Gastrocnemius medialis (tissue), 4 donors: ENCODE measurements at regions of chr1 and their contacts with region 1.

Region 1: GRCh38 chr1:224454397-224455066 is 19.9 kb upstream of the WDR26 start:
- DNase-seq: peak in 1 of 2 donors; percentile 22
- ATAC-seq: no peak
- H3K4me3 ChIP-seq: no peak overlapping the region
- H3K27ac ChIP-seq: peak overlapping the region in 2 of 4 donors; percentile 37 to 41
- H3K4me1 ChIP-seq: peaks cover 16 to 50% of the 10 kb centered on the region in 2 donors
- H3K27me3 ChIP-seq: no peaks in the 10 kb centered on the region
- CTCF ChIP-seq: no peak
- POLR2A ChIP-seq: no peak

Region 2: GRCh38 chr1:223887747-223888418 is 566.6 kb before region 1 on chr1:
- in situ Hi-C with region 1: no loop called
- intact Hi-C with region 1: loop called (anchors 5 kb)
- DNase-seq: peak; percentile 46 to 67
- ATAC-seq: peak; percentile 93 to 95
- H3K4me3 ChIP-seq: peak overlapping the region; percentile 14 to 48 (median 41)
- H3K27ac ChIP-seq: peak overlapping the region; percentile 73 to 90 (median 84)
- H3K4me1 ChIP-seq: peaks cover 14 to 25% of the 10 kb centered on the region in 2 donors
- H3K27me3 ChIP-seq: no peaks in the 10 kb centered on the region
- CTCF ChIP-seq: no peak
- POLR2A ChIP-seq: no peak

Region 3: DNA sequence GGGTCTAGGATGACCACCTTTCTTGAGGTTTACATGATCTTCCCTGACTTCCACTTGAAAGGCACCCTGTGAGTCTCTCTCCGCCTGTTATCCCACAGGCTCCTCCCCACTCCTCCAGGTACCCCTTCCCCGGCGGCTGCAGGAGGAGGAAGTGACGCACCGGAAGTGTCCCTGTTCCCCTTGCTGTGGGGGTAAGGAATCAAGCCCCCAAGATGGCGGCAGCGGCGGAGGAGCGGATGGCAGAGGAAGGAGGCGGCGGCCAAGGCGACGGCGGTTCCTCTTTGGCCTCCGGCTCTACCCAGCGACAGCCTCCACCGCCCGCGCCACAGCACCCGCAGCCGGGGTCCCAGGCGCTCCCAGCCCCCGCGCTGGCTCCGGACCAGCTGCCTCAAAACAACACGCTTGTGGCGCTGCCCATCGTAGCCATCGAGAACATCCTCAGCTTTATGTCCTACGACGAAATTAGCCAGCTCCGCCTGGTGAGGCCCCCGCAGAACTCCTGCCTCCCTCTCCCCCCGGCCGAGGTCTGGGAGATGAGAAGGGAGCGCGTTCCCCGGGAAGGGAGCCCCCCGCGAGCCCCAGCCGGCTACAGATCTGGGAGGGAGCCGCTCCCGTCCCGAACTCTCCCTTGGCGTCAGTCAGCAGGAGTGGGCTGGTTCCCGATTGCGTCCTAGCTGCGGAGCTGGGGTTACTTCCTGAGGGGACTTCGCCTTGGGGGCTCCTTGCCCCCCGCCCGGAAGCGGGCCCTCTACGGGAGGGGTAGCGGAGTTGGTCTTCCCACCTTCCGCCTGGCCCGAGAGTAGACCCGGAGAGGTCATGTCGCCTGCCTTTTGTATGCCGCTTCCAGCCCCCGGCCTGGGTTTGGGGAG is 340.4 kb before region 1 on chr1 and contains the start of gene FBXO28:
- in situ Hi-C with region 1: loop called in 2 of 4 experiments (anchors 5 kb)
- intact Hi-C with region 1: loop called (anchors 1 kb)
- DNase-seq: peak; percentile 92 to 94
- ATAC-seq: peak; percentile 98 to 99
- H3K4me3 ChIP-seq: peak within 1 kb of the TSS; percentile 74 to 98 (median 88)
- H3K27ac ChIP-seq: peak within 1 kb of the TSS; percentile 85 to 96 (median 92)
- H3K4me1 ChIP-seq: peaks cover 21 to 23% of the 10 kb centered on the region in 2 donors
- H3K27me3 ChIP-seq: peaks cover 0 to 7% (median 3%) of the 10 kb centered on the region in 3 donors
- CTCF ChIP-seq: no peak
- POLR2A ChIP-seq: peak; percentile 78 to 81
- total RNA-seq, gene FBXO28: 20.2 to 30.9 (median 27.4) TPM

Region 4: GRCh38 chr1:224127925-224128819 is 326.4 kb before region 1 on chr1:
- in situ Hi-C with region 1: loop called in 1 of 4 experiments (anchors 10 kb)
- intact Hi-C with region 1: no loop called
- DNase-seq: no peak
- ATAC-seq: no peak
- H3K4me3 ChIP-seq: no peak overlapping the region
- H3K27ac ChIP-seq: no peak overlapping the region
- H3K4me1 ChIP-seq: peaks cover 0 to 3% of the 10 kb centered on the region in 2 donors
- H3K27me3 ChIP-seq: no peaks in the 10 kb centered on the region
- CTCF ChIP-seq: no peak
- POLR2A ChIP-seq: no peak

Region 5: GRCh38 chr1:224259936-224260335 is 194.6 kb before region 1 on chr1:
- in situ Hi-C with region 1: no loop called
- intact Hi-C with region 1: no loop called
- DNase-seq: no peak
- ATAC-seq: no peak
- H3K4me3 ChIP-seq: no peak overlapping the region
- H3K27ac ChIP-seq: no peak overlapping the region
- H3K4me1 ChIP-seq: no peaks in the 10 kb centered on the region
- H3K27me3 ChIP-seq: no peaks in the 10 kb centered on the region
- CTCF ChIP-seq: no peak
- POLR2A ChIP-seq: no peak

Region 6: GRCh38 chr1:224329842-224330753 is 124.4 kb before region 1 on chr1 and contains the start of gene NVL:
- in situ Hi-C with region 1: loop called in 2 of 4 experiments (anchors 10 to 25 kb)
- intact Hi-C with region 1: loop called (anchors 1 kb)
- DNase-seq: peak; percentile 78 to 82
- ATAC-seq: peak; percentile 96 to 97
- H3K4me3 ChIP-seq: peak within 1 kb of the TSS; percentile 87 to 96 (median 89)
- H3K27ac ChIP-seq: peak within 1 kb of the TSS; percentile 87 to 95 (median 91)
- H3K4me1 ChIP-seq: peaks cover 17 to 19% of the 10 kb centered on the region in 2 donors
- H3K27me3 ChIP-seq: no peaks in the 10 kb centered on the region
- CTCF ChIP-seq: no peak
- POLR2A ChIP-seq: peak; percentile 50 to 53
- total RNA-seq, gene NVL: 6.5 to 32.5 (median 7.7) TPM

Region 7: GRCh38 chr1:224356685-224357625 is 97.6 kb before region 1 on chr1 and contains the start of gene CNIH4:
- in situ Hi-C with region 1: no loop called
- intact Hi-C with region 1: loop called (anchors 5 kb)
- DNase-seq: peak; percentile 90 to 93
- ATAC-seq: peak; percentile 98
- H3K4me3 ChIP-seq: peak within 1 kb of the TSS; percentile 72 to 89 (median 88)
- H3K27ac ChIP-seq: peak within 1 kb of the TSS; percentile 85 to 95 (median 89)
- H3K4me1 ChIP-seq: peaks cover 23 to 33% of the 10 kb centered on the region in 2 donors
- H3K27me3 ChIP-seq: no peaks in the 10 kb centered on the region
- CTCF ChIP-seq: no peak
- POLR2A ChIP-seq: peak; percentile 93 to 94
- total RNA-seq, gene CNIH4: 24.5 to 58.5 (median 39.1) TPM